Activated naive CD4-positive, alpha-beta T cell treated with anti-CD3 and anti-CD28 coated beads for 36 hours (primary cell): ENCODE measurements at regions of chr1 and their contacts with region 1.

Region 1: GRCh38 chr1:56584910-56585528 is 5.7 kb upstream of the PLPP3 start:
- DNase-seq: peak; percentile 9
- H3K4me3 Mint-ChIP-seq: no peak overlapping the region
- H3K27ac Mint-ChIP-seq: no peak overlapping the region
- H3K4me1 Mint-ChIP-seq: no peaks in the 10 kb centered on the region
- H3K27me3 Mint-ChIP-seq: peaks cover 12% of the 10 kb centered on the region

Region 2: GRCh38 chr1:55140546-55140983 is 1444.5 kb before region 1 on chr1:
- CTCF ChIA-PET with region 1: no interaction called
- intact Hi-C with region 1: loop called (anchors 5 kb)
- DNase-seq: peak; percentile 89
- H3K4me3 Mint-ChIP-seq: no peak overlapping the region
- H3K27ac Mint-ChIP-seq: peak overlapping the region; percentile 81
- H3K4me1 Mint-ChIP-seq: peaks cover 15% of the 10 kb centered on the region
- H3K27me3 Mint-ChIP-seq: no peaks in the 10 kb centered on the region

Region 3: GRCh38 chr1:55284852-55285251 is 1300.2 kb before region 1 on chr1:
- CTCF ChIA-PET with region 1: no interaction called
- intact Hi-C with region 1: loop called (anchors 2 kb)
- DNase-seq: peak; percentile 52
- H3K4me3 Mint-ChIP-seq: no peak overlapping the region
- H3K27ac Mint-ChIP-seq: no peak overlapping the region
- H3K4me1 Mint-ChIP-seq: peaks cover 25% of the 10 kb centered on the region
- H3K27me3 Mint-ChIP-seq: peaks cover 2% of the 10 kb centered on the region

Region 4: DNA sequence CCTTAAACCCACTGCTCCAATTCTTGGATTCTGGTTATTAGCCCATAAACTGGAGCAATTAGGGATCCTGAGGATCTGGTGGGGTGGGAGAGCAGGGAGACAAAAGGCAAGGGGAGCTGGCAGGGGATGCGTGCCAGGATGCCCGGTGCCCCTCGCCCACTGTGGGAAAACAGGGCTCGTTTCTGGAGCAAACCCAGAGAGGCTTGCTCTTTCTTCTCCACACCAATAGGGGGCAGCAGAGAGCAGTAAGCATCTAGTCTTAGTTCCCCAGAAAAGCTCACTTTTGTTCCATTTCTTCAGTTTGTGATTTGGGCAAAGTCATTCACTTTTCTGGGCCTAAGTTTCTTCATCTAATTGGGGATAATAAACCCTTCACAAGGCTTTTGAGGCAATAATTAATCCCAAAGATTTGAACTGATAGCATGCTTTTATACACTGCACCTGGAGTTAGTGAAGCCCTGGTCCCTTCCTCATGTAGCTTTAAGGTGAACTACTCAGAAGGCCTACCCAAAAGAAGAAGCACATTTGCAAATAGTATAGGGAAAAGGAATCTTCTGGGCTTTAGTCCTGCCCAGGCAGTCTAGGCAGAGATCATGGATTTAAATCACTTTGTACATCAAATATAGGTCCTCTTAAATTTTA is 1209.3 kb before region 1 on chr1:
- CTCF ChIA-PET with region 1: interaction called, 5 read pairs
- intact Hi-C with region 1: loop called (anchors 2 kb)
- DNase-seq: peak; percentile 56
- H3K4me3 Mint-ChIP-seq: no peak overlapping the region
- H3K27ac Mint-ChIP-seq: no peak overlapping the region
- H3K4me1 Mint-ChIP-seq: peaks cover 3% of the 10 kb centered on the region
- H3K27me3 Mint-ChIP-seq: no peaks in the 10 kb centered on the region

Region 5: GRCh38 chr1:55478742-55479141 is 1106.3 kb before region 1 on chr1:
- CTCF ChIA-PET with region 1: interaction called, 5 read pairs
- intact Hi-C with region 1: loop called (anchors 10 kb)
- DNase-seq: no peak
- H3K4me3 Mint-ChIP-seq: no peak overlapping the region
- H3K27ac Mint-ChIP-seq: no peak overlapping the region
- H3K4me1 Mint-ChIP-seq: no peaks in the 10 kb centered on the region
- H3K27me3 Mint-ChIP-seq: peaks cover 21% of the 10 kb centered on the region

Region 6: GRCh38 chr1:56409094-56409691 is 175.8 kb before region 1 on chr1:
- CTCF ChIA-PET with region 1: no interaction called
- intact Hi-C with region 1: loop called (anchors 5 kb)
- DNase-seq: no peak
- H3K4me3 Mint-ChIP-seq: no peak overlapping the region
- H3K27ac Mint-ChIP-seq: no peak overlapping the region
- H3K4me1 Mint-ChIP-seq: no peaks in the 10 kb centered on the region
- H3K27me3 Mint-ChIP-seq: no peaks in the 10 kb centered on the region